GM12878 (cell line): ENCODE measurements at regions of chr6 and their contacts with region 1.

Region 1: GRCh38 chr6:52419809-52420670 is at the start of gene EFHC1:
- DNase-seq: peak; percentile 92
- ATAC-seq: peak; percentile 93
- H3K4me3 ChIP-seq: peak within 1 kb of the TSS; percentile 83
- H3K27ac ChIP-seq: peak within 1 kb of the TSS; percentile 79
- H3K4me1 ChIP-seq: peaks cover 18% of the 10 kb centered on the region
- H3K27me3 ChIP-seq: no peaks in the 10 kb centered on the region
- CTCF ChIP-seq: no peak
- EP300 ChIP-seq: peak in 1 of 2 experiments; percentile 50; a peak in 1 of 4 replicates
- POLR2A ChIP-seq: peak; percentile 96
- RAD21 ChIP-seq: no peak
- polyA plus RNA-seq, gene EFHC1: 9.0 to 9.1 TPM

Region 2: DNA sequence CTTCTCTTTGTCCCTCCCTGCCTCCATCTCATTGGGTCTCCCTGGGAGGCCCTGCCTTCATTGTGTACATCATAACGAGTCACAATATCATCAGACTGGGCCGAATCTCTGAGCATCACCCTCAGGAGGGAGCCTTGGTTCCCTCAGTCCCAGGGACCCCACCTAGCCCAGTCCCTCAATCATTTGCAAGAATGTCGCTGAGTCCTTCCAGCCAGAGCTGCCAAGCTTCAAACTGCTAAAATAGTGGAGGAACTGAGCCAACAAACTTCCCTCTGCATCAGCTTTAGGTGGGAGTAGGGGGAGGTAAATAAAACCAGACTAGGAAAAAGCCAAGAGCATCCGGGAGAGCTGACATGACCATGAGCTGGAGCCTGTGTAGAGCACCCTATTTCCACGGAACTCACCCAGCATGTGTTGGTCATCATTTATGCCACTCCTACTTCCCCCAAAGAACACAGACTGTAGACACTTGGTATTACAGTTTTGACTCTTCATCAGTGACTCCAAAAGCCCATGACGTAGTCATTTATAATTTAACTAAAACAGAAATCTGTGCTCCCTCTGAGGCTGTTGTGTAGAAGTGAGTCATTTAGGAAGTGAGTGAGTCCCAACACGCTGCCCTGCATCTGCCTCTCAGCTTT is 262.6 kb before region 1 on chr6:
- CTCF ChIA-PET with region 1: no interaction called
- POLR2A ChIA-PET with region 1: no interaction called
- RAD21 ChIA-PET with region 1: no interaction called
- SMC1A ChIA-PET with region 1: no interaction called
- in situ Hi-C with region 1: no loop called
- intact Hi-C with region 1: no loop called
- DNase-seq: peak; percentile 48
- ATAC-seq: peak; percentile 75
- H3K4me3 ChIP-seq: no peak overlapping the region
- H3K27ac ChIP-seq: no peak overlapping the region
- H3K4me1 ChIP-seq: peaks cover 29% of the 10 kb centered on the region
- H3K27me3 ChIP-seq: no peaks in the 10 kb centered on the region
- CTCF ChIP-seq: no peak
- EP300 ChIP-seq: 0 out of 4 replicates have a peak, but pooled peaks of 1 of the 2 experiments have one; percentile 23
- POLR2A ChIP-seq: no peak
- RAD21 ChIP-seq: no peak

Region 3: GRCh38 chr6:52361945-52362442 is 58.0 kb before region 1 on chr6 and contains the start of gene PAQR8:
- CTCF ChIA-PET with region 1: interaction called, 9 read pairs
- POLR2A ChIA-PET with region 1: interaction called, 3 read pairs
- RAD21 ChIA-PET with region 1: interaction called, 10 read pairs
- SMC1A ChIA-PET with region 1: interaction called, 3 read pairs
- in situ Hi-C with region 1: no loop called
- intact Hi-C with region 1: no loop called
- DNase-seq: no peak
- ATAC-seq: peak; percentile 90
- H3K4me3 ChIP-seq: peak within 1 kb of the TSS; percentile 94
- H3K27ac ChIP-seq: peak within 1 kb of the TSS; percentile 80
- H3K4me1 ChIP-seq: peaks cover 20% of the 10 kb centered on the region
- H3K27me3 ChIP-seq: no peaks in the 10 kb centered on the region
- CTCF ChIP-seq: no peak
- EP300 ChIP-seq: no peak
- POLR2A ChIP-seq: peak; percentile 78
- RAD21 ChIP-seq: no peak
- polyA plus RNA-seq, gene PAQR8: 3.9 to 4.7 TPM

Region 4: DNA sequence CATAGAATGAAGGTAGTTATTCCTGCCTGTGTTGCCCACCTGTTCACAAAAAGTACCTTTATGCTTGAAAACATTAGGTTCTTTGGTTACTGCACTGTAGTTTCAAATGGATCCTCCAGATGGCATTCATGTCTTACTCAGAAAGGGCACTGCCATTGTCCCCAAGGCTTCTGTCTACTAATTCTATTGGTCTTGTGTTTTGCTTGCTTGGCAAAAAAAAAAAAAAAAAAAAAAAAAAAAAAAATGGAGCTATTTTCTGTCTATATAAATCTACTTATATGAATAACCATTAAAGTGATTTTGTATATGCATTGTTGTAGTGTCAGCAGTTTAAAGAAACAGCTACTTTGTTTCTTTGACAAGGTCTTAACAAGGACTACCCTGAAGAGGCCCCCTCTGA is 12.6 kb before region 1 on chr6:
- CTCF ChIA-PET with region 1: interaction called, 11 read pairs
- POLR2A ChIA-PET with region 1: interaction called, 3 read pairs
- RAD21 ChIA-PET with region 1: interaction called, 7 read pairs
- SMC1A ChIA-PET with region 1: interaction called, 22 read pairs
- in situ Hi-C with region 1: no loop called
- intact Hi-C with region 1: no loop called
- DNase-seq: no peak
- ATAC-seq: peak; percentile 91
- H3K4me3 ChIP-seq: no peak overlapping the region
- H3K27ac ChIP-seq: no peak overlapping the region
- H3K4me1 ChIP-seq: no peaks in the 10 kb centered on the region
- H3K27me3 ChIP-seq: no peaks in the 10 kb centered on the region
- CTCF ChIP-seq: peak; percentile 50 to 59 (median 57); a peak in 5 of 6 replicates
- EP300 ChIP-seq: no peak
- POLR2A ChIP-seq: no peak
- RAD21 ChIP-seq: peak; percentile 70

Region 5: GRCh38 chr6:52505726-52506409 is 85.8 kb after region 1 on chr6:
- CTCF ChIA-PET with region 1: interaction called, 38 read pairs
- POLR2A ChIA-PET with region 1: interaction called, 16 read pairs
- RAD21 ChIA-PET with region 1: interaction called, 124 read pairs
- SMC1A ChIA-PET with region 1: interaction called, 249 read pairs
- in situ Hi-C with region 1: no loop called
- intact Hi-C with region 1: no loop called
- DNase-seq: no peak
- ATAC-seq: peak; percentile 63
- H3K4me3 ChIP-seq: no peak overlapping the region
- H3K27ac ChIP-seq: no peak overlapping the region
- H3K4me1 ChIP-seq: no peaks in the 10 kb centered on the region; the same call in 1 of the 2 replicates
- H3K27me3 ChIP-seq: no peaks in the 10 kb centered on the region
- CTCF ChIP-seq: peak; percentile 23 to 34 (median 29); a peak in 4 of 6 replicates
- EP300 ChIP-seq: no peak
- POLR2A ChIP-seq: no peak
- RAD21 ChIP-seq: peak; percentile 64

Region 6: GRCh38 chr6:52598123-52598823 is 178.2 kb after region 1 on chr6:
- CTCF ChIA-PET with region 1: interaction called, 118 read pairs
- POLR2A ChIA-PET with region 1: interaction called, 3 read pairs
- RAD21 ChIA-PET with region 1: interaction called, 8 read pairs
- SMC1A ChIA-PET with region 1: interaction called, 41 read pairs
- in situ Hi-C with region 1: no loop called
- intact Hi-C with region 1: loop called (anchors 1 kb)
- DNase-seq: no peak
- ATAC-seq: peak; percentile 53
- H3K4me3 ChIP-seq: no peak overlapping the region
- H3K27ac ChIP-seq: no peak overlapping the region
- H3K4me1 ChIP-seq: peaks cover 30% of the 10 kb centered on the region
- H3K27me3 ChIP-seq: no peaks in the 10 kb centered on the region
- CTCF ChIP-seq: peak; percentile 41 to 60 (median 51)
- EP300 ChIP-seq: no peak
- POLR2A ChIP-seq: no peak
- RAD21 ChIP-seq: peak; percentile 56

Region 7: GRCh38 chr6:52664186-52664990 is 244.3 kb after region 1 on chr6:
- CTCF ChIA-PET with region 1: interaction called, 137 read pairs
- POLR2A ChIA-PET with region 1: interaction called, 17 read pairs
- RAD21 ChIA-PET with region 1: interaction called, 76 read pairs
- SMC1A ChIA-PET with region 1: interaction called, 115 read pairs
- in situ Hi-C with region 1: loop called (anchors 5 kb)
- intact Hi-C with region 1: loop called (anchors 1 kb)
- DNase-seq: peak; percentile 83
- ATAC-seq: peak; percentile 94
- H3K4me3 ChIP-seq: peak overlapping the region; percentile 73
- H3K27ac ChIP-seq: peak overlapping the region; percentile 30
- H3K4me1 ChIP-seq: peaks cover 24% of the 10 kb centered on the region
- H3K27me3 ChIP-seq: no peaks in the 10 kb centered on the region
- CTCF ChIP-seq: no peak
- EP300 ChIP-seq: no peak
- POLR2A ChIP-seq: peak; percentile 95
- RAD21 ChIP-seq: no peak

Region 8: GRCh38 chr6:52689857-52690256 is 269.8 kb after region 1 on chr6:
- CTCF ChIA-PET with region 1: no interaction called
- POLR2A ChIA-PET with region 1: no interaction called
- RAD21 ChIA-PET with region 1: no interaction called
- SMC1A ChIA-PET with region 1: no interaction called
- in situ Hi-C with region 1: no loop called
- intact Hi-C with region 1: no loop called
- DNase-seq: no peak
- ATAC-seq: no peak
- H3K4me3 ChIP-seq: no peak overlapping the region
- H3K27ac ChIP-seq: no peak overlapping the region
- H3K4me1 ChIP-seq: no peaks in the 10 kb centered on the region
- H3K27me3 ChIP-seq: no peaks in the 10 kb centered on the region
- CTCF ChIP-seq: no peak
- EP300 ChIP-seq: no peak
- POLR2A ChIP-seq: no peak
- RAD21 ChIP-seq: no peak

Region 9: DNA sequence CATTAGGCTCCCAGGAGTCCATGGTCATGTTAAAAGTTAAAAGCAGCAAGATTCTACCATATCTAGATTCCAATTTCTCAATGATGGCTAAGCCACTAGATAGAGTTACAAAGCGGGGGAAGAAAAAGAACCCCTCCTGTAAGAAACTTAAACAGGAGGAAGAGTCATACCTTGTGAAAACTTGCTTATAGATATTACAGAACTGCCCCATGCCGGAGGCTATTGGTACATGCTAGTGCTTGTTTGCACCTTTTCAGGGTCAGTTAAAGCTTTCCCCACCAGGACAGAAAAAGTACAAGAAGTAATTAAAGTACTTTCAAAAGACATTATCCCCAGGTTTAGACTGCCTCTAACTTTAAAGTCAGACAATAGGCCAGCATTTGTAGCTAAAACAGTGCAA is 505.0 kb after region 1 on chr6:
- CTCF ChIA-PET with region 1: no interaction called
- POLR2A ChIA-PET with region 1: no interaction called
- RAD21 ChIA-PET with region 1: no interaction called
- SMC1A ChIA-PET with region 1: no interaction called
- in situ Hi-C with region 1: no loop called
- intact Hi-C with region 1: no loop called
- DNase-seq: no peak
- ATAC-seq: no peak
- H3K4me3 ChIP-seq: no peak overlapping the region
- H3K27ac ChIP-seq: no peak overlapping the region
- H3K4me1 ChIP-seq: no peaks in the 10 kb centered on the region
- H3K27me3 ChIP-seq: no peaks in the 10 kb centered on the region
- CTCF ChIP-seq: no peak
- EP300 ChIP-seq: no peak
- POLR2A ChIP-seq: no peak
- RAD21 ChIP-seq: no peak